Panc1 (cell line): ENCODE measurements at regions of chr9 and their contacts with region 1.

Region 1: GRCh38 chr9:121640076-121640475 is 11.4 kb upstream of the DAB2IP start:
- DNase-seq: no peak
- ATAC-seq: peak; percentile 87
- H3K4me3 ChIP-seq: no peak overlapping the region
- H3K27ac ChIP-seq: no peak overlapping the region
- H3K4me1 ChIP-seq: no peaks in the 10 kb centered on the region
- H3K27me3 ChIP-seq: no peaks in the 10 kb centered on the region
- CTCF ChIP-seq: peak; percentile 76

Region 2: DNA sequence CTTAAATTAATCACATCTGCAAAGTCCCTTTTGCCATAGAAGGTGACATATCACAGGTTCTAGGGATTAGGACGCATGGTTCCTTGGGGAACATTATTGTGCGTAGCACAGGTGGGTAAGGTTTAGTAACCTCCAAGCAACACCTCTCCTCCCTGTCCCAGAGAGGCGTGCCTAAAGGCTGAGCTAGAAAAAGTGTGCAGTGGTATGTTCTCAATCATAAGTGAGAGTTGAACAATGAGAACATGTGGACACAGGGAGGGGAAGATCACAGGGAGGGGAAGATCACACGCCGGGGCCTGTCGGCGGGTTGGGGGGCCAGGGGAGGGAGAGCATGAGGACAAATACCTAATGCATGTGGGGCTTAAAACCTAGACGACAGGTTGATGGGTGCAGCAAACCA is 26.2 kb after region 1 on chr9:
- CTCF ChIA-PET with region 1: interaction called, 12 read pairs
- POLR2A ChIA-PET with region 1: no interaction called
- in situ Hi-C with region 1: no loop called
- intact Hi-C with region 1: no loop called
- DNase-seq: no peak
- ATAC-seq: no peak
- H3K4me3 ChIP-seq: no peak overlapping the region
- H3K27ac ChIP-seq: no peak overlapping the region
- H3K4me1 ChIP-seq: no peaks in the 10 kb centered on the region
- H3K27me3 ChIP-seq: no peaks in the 10 kb centered on the region
- CTCF ChIP-seq: no peak

Region 3: GRCh38 chr9:121698627-121699570 is 58.8 kb after region 1 on chr9:
- CTCF ChIA-PET with region 1: no interaction called
- POLR2A ChIA-PET with region 1: no interaction called
- in situ Hi-C with region 1: no loop called
- intact Hi-C with region 1: loop called (anchors 10 kb)
- DNase-seq: no peak
- ATAC-seq: peak; percentile 80
- H3K4me3 ChIP-seq: peak overlapping the region; percentile 42 to 51
- H3K27ac ChIP-seq: no peak overlapping the region
- H3K4me1 ChIP-seq: no peaks in the 10 kb centered on the region; the same call in none of the 2 replicates
- H3K27me3 ChIP-seq: no peaks in the 10 kb centered on the region
- CTCF ChIP-seq: no peak